Activated naive CD4-positive, alpha-beta T cell treated with anti-CD3 and anti-CD28 coated beads for 36 hours (primary cell): ENCODE measurements at regions of chr10 and their contacts with region 1.

Region 1: GRCh38 chr10:92592761-92593618 is at the start of gene KIF11:
- DNase-seq: peak; percentile 99
- H3K4me3 Mint-ChIP-seq: peak within 1 kb of the TSS; percentile 95
- H3K27ac Mint-ChIP-seq: peak within 1 kb of the TSS; percentile 99
- H3K4me1 Mint-ChIP-seq: peaks cover 23% of the 10 kb centered on the region
- H3K27me3 Mint-ChIP-seq: no peaks in the 10 kb centered on the region
- total RNA-seq, gene KIF11: 43.2 to 43.4 TPM

Region 2: DNA sequence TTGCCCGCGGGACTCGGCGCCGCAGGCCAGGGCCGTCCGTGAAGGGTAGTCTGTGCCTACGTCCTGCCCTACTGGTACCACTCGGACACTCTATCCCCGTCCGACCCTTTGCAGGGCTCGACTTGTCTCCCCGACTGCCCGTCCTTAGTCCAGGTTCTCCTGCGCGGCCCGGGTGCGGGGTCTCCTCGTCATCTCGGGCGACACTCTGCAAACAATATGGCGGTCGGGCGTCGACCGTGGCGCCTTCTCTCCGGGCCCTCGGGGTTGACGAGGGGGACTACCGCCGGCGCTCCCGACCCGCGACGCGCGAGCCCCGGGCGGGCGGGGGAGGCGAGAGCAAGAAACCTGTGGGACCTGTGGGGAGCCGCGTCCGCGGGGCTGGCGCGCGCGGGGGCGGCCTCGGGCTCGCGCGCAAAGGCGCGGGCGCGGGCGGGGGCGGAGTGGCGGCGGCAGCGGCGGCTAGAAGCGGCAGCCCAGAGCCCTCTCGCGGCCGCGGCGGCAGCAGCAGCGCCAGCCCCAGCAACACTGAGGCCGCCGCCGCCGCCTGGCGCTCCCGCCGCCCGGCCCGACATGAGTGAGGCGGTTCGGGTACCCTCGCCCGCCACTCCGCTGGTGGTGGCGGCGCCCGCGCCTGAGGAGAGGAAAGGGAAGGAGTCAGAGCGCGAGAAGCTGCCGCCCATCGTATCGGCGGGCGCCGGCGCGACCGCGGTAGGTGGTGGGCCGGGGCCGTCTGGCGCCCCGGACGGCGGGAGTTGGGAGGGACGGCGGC is 1182.9 kb before region 1 on chr10 and contains the start of gene HECTD2:
- CTCF ChIA-PET with region 1: no interaction called
- intact Hi-C with region 1: loop called (anchors 5 kb)
- DNase-seq: peak; percentile 77
- H3K4me3 Mint-ChIP-seq: peak within 1 kb of the TSS; percentile 83
- H3K27ac Mint-ChIP-seq: peak within 1 kb of the TSS; percentile 88
- H3K4me1 Mint-ChIP-seq: peaks cover 15% of the 10 kb centered on the region
- H3K27me3 Mint-ChIP-seq: peaks cover 12% of the 10 kb centered on the region
- total RNA-seq, gene HECTD2: 2.3 to 3.1 TPM

Region 3: DNA sequence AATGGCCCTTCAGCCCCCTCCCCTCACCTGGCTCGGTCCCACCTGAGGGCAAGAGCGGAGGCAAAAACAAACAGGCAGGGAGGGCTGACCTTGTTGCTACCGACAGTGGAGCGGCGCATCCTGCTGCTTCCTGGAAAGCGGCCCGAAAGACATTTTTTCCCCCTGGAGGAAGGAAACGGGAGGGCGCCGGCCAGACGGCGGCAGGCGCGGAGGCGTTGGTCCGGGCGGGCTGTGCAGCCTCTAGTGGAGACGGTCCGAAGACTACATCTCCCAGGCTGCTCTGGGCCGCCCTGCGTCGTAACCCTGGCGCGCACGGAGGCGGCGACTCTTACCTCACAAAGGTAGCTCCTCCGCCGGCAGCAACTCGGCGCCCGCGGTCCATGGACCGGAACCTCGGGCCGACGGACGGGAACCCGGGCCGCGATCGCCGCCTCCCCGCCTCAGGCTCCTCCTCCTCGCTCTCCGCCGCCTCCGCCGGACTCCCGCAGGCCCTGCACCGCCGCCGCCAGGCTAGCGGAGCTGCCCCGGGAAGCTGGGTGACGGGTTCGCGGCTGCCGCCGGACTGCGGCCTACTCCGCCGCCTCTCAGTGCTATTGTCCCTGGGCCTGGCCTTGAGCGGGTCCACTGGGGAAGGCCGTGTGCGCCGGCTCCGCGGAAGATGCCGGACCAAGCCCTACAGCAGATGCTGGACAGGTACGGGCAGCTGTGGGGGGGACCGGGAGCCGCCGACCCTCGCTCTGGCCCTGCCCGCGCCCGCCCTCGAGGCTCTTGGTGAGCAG is 302.0 kb before region 1 on chr10 and contains the starts of genes CPEB3 and MARCHF5:
- CTCF ChIA-PET with region 1: no interaction called
- intact Hi-C with region 1: loop called (anchors 1 kb)
- DNase-seq: peak; percentile 95
- H3K4me3 Mint-ChIP-seq: peak within 1 kb of the TSS; percentile 81
- H3K27ac Mint-ChIP-seq: peak within 1 kb of the TSS; percentile 77
- H3K4me1 Mint-ChIP-seq: peaks cover 25% of the 10 kb centered on the region
- H3K27me3 Mint-ChIP-seq: no peaks in the 10 kb centered on the region
- total RNA-seq, gene CPEB3: 1.0 to 1.3 TPM
- total RNA-seq, gene MARCHF5: 26.1 to 28.1 TPM

Region 4: DNA sequence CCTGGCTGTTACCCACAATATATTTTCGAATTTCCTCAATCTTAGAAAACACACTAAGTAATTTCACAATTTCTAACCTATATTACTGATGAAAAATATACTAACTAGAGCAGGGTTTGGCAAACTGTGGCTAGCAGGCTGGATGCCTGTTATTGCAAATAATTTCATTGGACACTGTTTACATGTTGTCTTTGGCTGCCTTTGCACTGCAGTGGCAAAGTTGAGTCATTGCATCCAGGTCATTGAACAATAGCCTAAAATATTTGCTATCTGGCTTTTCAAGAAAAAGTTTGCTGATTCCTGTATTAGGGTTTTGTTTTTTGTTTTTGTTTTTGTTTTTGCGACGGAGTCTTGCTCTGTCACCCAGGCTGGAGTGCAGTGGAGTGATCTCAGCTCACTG is 47.1 kb after region 1 on chr10:
- CTCF ChIA-PET with region 1: interaction called, 6 read pairs
- intact Hi-C with region 1: loop called (anchors 5 kb)
- DNase-seq: no peak
- H3K4me3 Mint-ChIP-seq: no peak overlapping the region
- H3K27ac Mint-ChIP-seq: no peak overlapping the region
- H3K4me1 Mint-ChIP-seq: peaks cover 4% of the 10 kb centered on the region
- H3K27me3 Mint-ChIP-seq: no peaks in the 10 kb centered on the region

Region 5: DNA sequence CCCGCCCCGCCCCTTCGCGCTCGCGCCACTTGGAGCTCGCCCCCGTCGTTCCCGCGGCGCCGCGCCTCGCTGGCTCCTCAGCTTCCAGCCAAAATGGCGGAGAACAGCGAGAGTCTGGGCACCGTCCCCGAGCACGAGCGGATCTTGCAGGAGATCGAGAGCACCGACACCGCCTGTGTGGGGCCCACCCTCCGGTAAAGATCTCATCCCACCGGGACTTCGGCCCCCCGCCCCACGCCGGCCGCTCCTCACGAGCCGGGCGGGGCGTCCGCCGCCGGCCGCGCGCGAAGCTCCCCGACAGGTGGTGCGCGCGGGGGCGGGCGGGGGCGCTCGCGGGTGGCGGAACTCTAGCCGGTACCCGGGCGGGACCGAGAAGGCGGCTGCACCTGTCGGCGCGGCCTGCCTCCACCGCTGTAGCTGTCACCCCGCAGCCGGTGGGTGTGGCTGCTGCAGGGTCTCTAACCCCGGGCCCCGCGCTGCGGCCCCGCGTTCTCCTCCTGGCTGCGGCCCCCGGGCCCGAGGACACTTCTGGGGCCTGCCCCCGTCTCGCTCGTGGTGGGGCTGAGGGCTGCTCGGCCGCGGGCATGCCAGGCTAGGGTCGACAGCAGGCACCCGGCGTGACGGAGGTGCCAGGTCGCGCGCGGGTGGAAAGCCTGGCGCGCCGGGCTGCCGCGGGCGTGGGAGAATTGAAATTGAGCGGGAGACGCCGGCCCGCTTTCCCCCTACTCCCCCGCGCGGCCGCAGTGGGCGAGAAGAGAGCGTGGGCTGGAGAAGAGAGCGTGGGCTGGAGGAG is 255.6 kb after region 1 on chr10 and contains the start of gene EXOC6:
- CTCF ChIA-PET with region 1: interaction called, 4 read pairs
- intact Hi-C with region 1: loop called (anchors 1 kb)
- DNase-seq: peak; percentile 86
- H3K4me3 Mint-ChIP-seq: peak within 1 kb of the TSS; percentile 88
- H3K27ac Mint-ChIP-seq: peak within 1 kb of the TSS; percentile 61
- H3K4me1 Mint-ChIP-seq: peaks cover 24% of the 10 kb centered on the region
- H3K27me3 Mint-ChIP-seq: no peaks in the 10 kb centered on the region
- total RNA-seq, gene EXOC6: 7.6 to 9.3 TPM